ENCODE measurements at regions of chr1 and their contacts with region 1.

Region 1: DNA sequence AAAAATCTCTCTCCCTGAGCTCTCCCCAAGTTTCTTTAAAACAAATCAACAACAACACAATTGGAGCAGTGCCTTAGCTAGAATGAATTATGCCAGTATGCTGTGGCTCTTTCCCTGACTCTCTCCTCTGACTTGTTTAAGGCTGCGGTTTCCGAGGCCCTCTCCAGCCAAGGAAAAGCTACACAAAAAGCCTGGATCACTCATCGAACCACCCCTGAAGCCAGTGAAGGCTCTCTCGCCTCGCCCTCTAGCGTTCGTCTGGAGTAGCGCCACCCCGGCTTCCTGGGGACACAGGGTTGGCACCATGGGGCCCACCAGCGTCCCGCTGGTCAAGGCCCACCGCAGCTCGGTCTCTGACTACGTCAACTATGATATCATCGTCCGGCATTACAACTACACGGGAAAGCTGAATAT is 1.9 kb downstream of the S1PR1 start:
- DNase-seq: peak; percentile 63 to 92 (median 84)
- ATAC-seq: peak; percentile 27 to 39
- H3K4me3 Mint-ChIP-seq: peak overlapping the region; percentile 92 to 100 (median 100)
- H3K27ac Mint-ChIP-seq: peak overlapping the region; percentile 95 to 100 (median 99)
- H3K4me1 Mint-ChIP-seq: peaks cover 37 to 72% (median 64%) of the 10 kb centered on the region in 4 donors
- H3K27me3 Mint-ChIP-seq: no peaks in the 10 kb centered on the region

Region 2: DNA sequence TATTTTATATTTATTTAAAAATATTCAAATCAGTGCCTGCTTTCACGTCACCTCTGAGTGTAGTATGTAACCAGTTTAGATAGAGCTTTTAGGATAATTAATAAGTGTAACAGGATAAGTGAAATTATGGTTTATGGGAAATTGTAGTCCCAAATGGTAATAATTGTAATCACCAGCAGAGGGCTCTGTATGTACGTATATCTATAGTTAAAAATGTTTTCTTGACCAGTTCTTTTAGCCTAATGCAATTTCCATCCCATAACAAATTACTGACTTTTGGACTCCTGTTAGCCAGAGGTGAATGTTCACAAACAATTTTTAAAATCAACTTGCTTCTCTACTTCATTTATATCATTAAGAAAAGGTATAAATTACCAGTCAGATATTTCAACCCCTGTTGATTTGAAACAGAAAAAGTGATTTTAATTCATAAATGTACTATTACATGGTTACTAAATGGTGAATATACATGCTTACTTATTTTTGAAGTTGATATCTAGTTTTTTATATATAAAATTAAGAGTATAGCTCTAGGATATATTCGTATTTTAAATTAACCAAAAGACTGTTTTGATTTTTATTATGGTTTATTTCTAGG is 317.5 kb before region 1 on chr1:
- POLR2A ChIA-PET with region 1: interaction called, 164 read pairs
- DNase-seq: peak in 3 of 10 donors; percentile 59 to 73 (median 63)
- ATAC-seq: no peak
- H3K4me3 Mint-ChIP-seq: peak overlapping the region in 2 of 10 donors; percentile 31 to 34
- H3K27ac Mint-ChIP-seq: peak overlapping the region in 9 of 10 donors; percentile 56 to 94 (median 84)
- H3K4me1 Mint-ChIP-seq: peaks cover 14 to 49% (median 25%) of the 10 kb centered on the region in 4 donors
- H3K27me3 Mint-ChIP-seq: no peaks in the 10 kb centered on the region

Region 3: GRCh38 chr1:100950781-100951180 is 287.9 kb before region 1 on chr1:
- POLR2A ChIA-PET with region 1: interaction called, 17 read pairs
- DNase-seq: no peak
- ATAC-seq: no peak
- H3K4me3 Mint-ChIP-seq: peak overlapping the region in 5 of 10 donors; percentile 6 to 58 (median 17)
- H3K27ac Mint-ChIP-seq: peak overlapping the region in 9 of 10 donors; percentile 58 to 94 (median 78)
- H3K4me1 Mint-ChIP-seq: peaks cover 29 to 86% (median 62%) of the 10 kb centered on the region in 4 donors
- H3K27me3 Mint-ChIP-seq: peaks cover 0 to 2% (median 0%) of the 10 kb centered on the region in 5 donors

Region 4: DNA sequence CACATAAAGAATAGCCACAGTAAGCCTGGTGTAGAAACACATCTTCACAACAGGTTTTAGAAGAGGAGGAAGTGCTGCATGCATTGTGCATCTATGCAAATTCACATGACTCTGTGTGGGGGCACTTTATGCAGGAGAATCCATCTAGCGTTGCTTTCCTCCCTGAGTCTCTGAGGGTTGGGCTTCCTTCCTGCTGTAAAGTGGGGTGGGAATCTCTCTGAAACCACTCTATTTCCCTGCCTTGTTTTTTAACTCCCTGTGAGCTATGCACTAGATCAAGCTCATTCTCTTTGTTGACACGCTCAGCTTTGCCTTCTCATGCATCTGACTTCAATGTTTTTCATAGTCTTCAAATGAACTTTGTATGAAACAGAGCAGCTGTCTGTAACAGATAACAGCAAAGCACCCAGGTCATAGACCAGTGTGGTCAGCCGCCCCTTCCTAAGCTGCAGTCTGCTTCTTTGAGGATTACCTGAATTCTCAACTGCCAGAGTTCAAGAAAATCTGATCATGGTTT is 110.4 kb before region 1 on chr1:
- POLR2A ChIA-PET with region 1: interaction called, 81 read pairs
- DNase-seq: peak in 9 of 10 donors; percentile 11 to 62 (median 41)
- ATAC-seq: peak; percentile 75 to 82
- H3K4me3 Mint-ChIP-seq: peak overlapping the region; percentile 44 to 79 (median 64)
- H3K27ac Mint-ChIP-seq: peak overlapping the region; percentile 83 to 98 (median 94)
- H3K4me1 Mint-ChIP-seq: peaks cover 32 to 81% (median 65%) of the 10 kb centered on the region in 4 donors
- H3K27me3 Mint-ChIP-seq: no peaks in the 10 kb centered on the region

Region 5: GRCh38 chr1:101228424-101229134 is 10.1 kb before region 1 on chr1:
- POLR2A ChIA-PET with region 1: interaction called, 12 read pairs
- DNase-seq: no peak
- ATAC-seq: peak in 1 of 2 donors; percentile 38
- H3K4me3 Mint-ChIP-seq: no peak overlapping the region
- H3K27ac Mint-ChIP-seq: peak overlapping the region in 4 of 10 donors; percentile 44 to 82 (median 63)
- H3K4me1 Mint-ChIP-seq: peaks cover 11 to 26% (median 22%) of the 10 kb centered on the region in 4 donors
- H3K27me3 Mint-ChIP-seq: no peaks in the 10 kb centered on the region

Region 6: DNA sequence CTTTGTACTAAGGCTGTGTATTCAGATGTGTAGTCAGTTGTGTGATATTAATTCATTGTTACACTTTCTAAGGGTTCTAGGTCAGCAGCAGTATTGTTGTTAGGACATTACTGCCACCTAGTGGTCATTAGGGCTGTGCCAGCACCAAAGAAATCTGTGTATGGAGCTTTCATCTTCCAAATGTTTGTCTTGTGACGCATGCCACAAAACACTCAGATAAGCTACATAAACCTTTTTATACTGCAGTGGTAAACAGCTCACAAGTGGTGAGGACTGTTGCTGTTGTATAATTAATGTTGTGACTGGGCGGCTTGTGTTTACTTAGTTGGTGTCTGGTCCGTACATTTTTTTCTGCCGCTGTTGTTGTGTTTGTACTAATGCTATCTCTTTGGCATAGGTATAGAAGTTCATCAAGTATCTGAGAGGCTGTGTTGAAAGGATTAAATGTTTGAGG is 49.8 kb after region 1 on chr1:
- POLR2A ChIA-PET with region 1: interaction called, 240 read pairs
- DNase-seq: peak; percentile 10 to 84 (median 72)
- ATAC-seq: peak; percentile 58 to 70
- H3K4me3 Mint-ChIP-seq: peak overlapping the region in 5 of 10 donors; percentile 2 to 58 (median 26)
- H3K27ac Mint-ChIP-seq: peak overlapping the region; percentile 65 to 87 (median 84)
- H3K4me1 Mint-ChIP-seq: peaks cover 39 to 81% (median 74%) of the 10 kb centered on the region in 4 donors
- H3K27me3 Mint-ChIP-seq: no peaks in the 10 kb centered on the region